ENCODE measurements at regions of chr7 and their contacts with region 1.

Region 1: GRCh38 chr7:98745722-98746318 is 124.0 kb downstream of the TMEM130 start:
- DNase-seq: peak; percentile 83
- ATAC-seq: peak; percentile 64
- H3K4me3 Mint-ChIP-seq: no peak overlapping the region
- H3K27ac Mint-ChIP-seq: no peak overlapping the region
- H3K4me1 Mint-ChIP-seq: no peaks in the 10 kb centered on the region
- H3K27me3 Mint-ChIP-seq: peaks cover 3% of the 10 kb centered on the region
- CTCF ChIP-seq: peak; percentile 76

Region 2: GRCh38 chr7:98420966-98421612 is 324.7 kb before region 1 on chr7:
- CTCF ChIA-PET with region 1: interaction called, 15 read pairs
- POLR2A ChIA-PET with region 1: no interaction called
- intact Hi-C with region 1: no loop called
- DNase-seq: peak; percentile 73
- ATAC-seq: peak; percentile 82
- H3K4me3 Mint-ChIP-seq: no peak overlapping the region
- H3K27ac Mint-ChIP-seq: no peak overlapping the region
- H3K4me1 Mint-ChIP-seq: peaks cover 4% of the 10 kb centered on the region
- H3K27me3 Mint-ChIP-seq: peaks cover 6% of the 10 kb centered on the region
- CTCF ChIP-seq: peak; percentile 91

Region 3: GRCh38 chr7:98434095-98434494 is 311.7 kb before region 1 on chr7:
- CTCF ChIA-PET with region 1: interaction called, 40 read pairs
- POLR2A ChIA-PET with region 1: no interaction called
- intact Hi-C with region 1: loop called (anchors 5 kb)
- DNase-seq: no peak
- ATAC-seq: no peak
- H3K4me3 Mint-ChIP-seq: no peak overlapping the region
- H3K27ac Mint-ChIP-seq: no peak overlapping the region
- H3K4me1 Mint-ChIP-seq: no peaks in the 10 kb centered on the region
- H3K27me3 Mint-ChIP-seq: peaks cover 5% of the 10 kb centered on the region
- CTCF ChIP-seq: no peak

Region 4: GRCh38 chr7:98855610-98856422 is 110.0 kb after region 1 on chr7:
- CTCF ChIA-PET with region 1: no interaction called
- POLR2A ChIA-PET with region 1: no interaction called
- intact Hi-C with region 1: no loop called
- DNase-seq: no peak
- ATAC-seq: no peak
- H3K4me3 Mint-ChIP-seq: no peak overlapping the region
- H3K27ac Mint-ChIP-seq: no peak overlapping the region
- H3K4me1 Mint-ChIP-seq: no peaks in the 10 kb centered on the region
- H3K27me3 Mint-ChIP-seq: peaks cover 10% of the 10 kb centered on the region
- CTCF ChIP-seq: no peak

Measured in activated CD8-positive, alpha-beta T cell treated with anti-CD3 and anti-CD28 coated beads for 36 hours (primary cell).